ENCODE measurements at regions of chr7 and their contacts with region 1.

Region 1: GRCh38 chr7:87474533-87475358 is 734 bp downstream of the ABCB4 start:
- DNase-seq: peak; percentile 96
- ATAC-seq: peak; percentile 80
- H3K4me3 ChIP-seq: peak overlapping the region; percentile 77
- H3K27ac ChIP-seq: peak overlapping the region; percentile 72
- H3K4me1 ChIP-seq: peaks cover 12% of the 10 kb centered on the region
- H3K27me3 ChIP-seq: no peaks in the 10 kb centered on the region
- CTCF ChIP-seq: no peak
- EP300 ChIP-seq: peak; percentile 87 to 88
- POLR2A ChIP-seq: 0 out of 2 replicates have a peak, but pooled peaks have one; percentile 18
- RAD21 ChIP-seq: 0 out of 2 replicates have a peak, but pooled peaks have one; percentile 1

Region 2: GRCh38 chr7:87345166-87345927 is 129.4 kb before region 1 on chr7 and contains the start of gene CROT:
- CTCF ChIA-PET with region 1: no interaction called
- POLR2A ChIA-PET with region 1: interaction called, 3 read pairs
- RAD21 ChIA-PET with region 1: no interaction called
- SMC1A ChIA-PET with region 1: no interaction called
- in situ Hi-C with region 1: no loop called
- intact Hi-C with region 1: loop called (anchors 1 kb)
- DNase-seq: peak; percentile 67
- ATAC-seq: peak; percentile 97
- H3K4me3 ChIP-seq: peak within 1 kb of the TSS; percentile 80
- H3K27ac ChIP-seq: peak within 1 kb of the TSS; percentile 76
- H3K4me1 ChIP-seq: no peaks in the 10 kb centered on the region
- H3K27me3 ChIP-seq: no peaks in the 10 kb centered on the region
- CTCF ChIP-seq: no peak
- EP300 ChIP-seq: no peak
- POLR2A ChIP-seq: peak; percentile 91
- RAD21 ChIP-seq: no peak
- polyA plus RNA-seq, gene CROT: 5.5 to 6.0 TPM

Region 3: GRCh38 chr7:87391020-87391701 is 83.6 kb before region 1 on chr7:
- CTCF ChIA-PET with region 1: no interaction called
- POLR2A ChIA-PET with region 1: no interaction called
- RAD21 ChIA-PET with region 1: no interaction called
- SMC1A ChIA-PET with region 1: no interaction called
- in situ Hi-C with region 1: no loop called
- intact Hi-C with region 1: no loop called
- DNase-seq: no peak
- ATAC-seq: no peak
- H3K4me3 ChIP-seq: no peak overlapping the region
- H3K27ac ChIP-seq: no peak overlapping the region
- H3K4me1 ChIP-seq: no peaks in the 10 kb centered on the region
- H3K27me3 ChIP-seq: no peaks in the 10 kb centered on the region
- CTCF ChIP-seq: no peak
- EP300 ChIP-seq: no peak
- POLR2A ChIP-seq: no peak
- RAD21 ChIP-seq: no peak

Region 4: DNA sequence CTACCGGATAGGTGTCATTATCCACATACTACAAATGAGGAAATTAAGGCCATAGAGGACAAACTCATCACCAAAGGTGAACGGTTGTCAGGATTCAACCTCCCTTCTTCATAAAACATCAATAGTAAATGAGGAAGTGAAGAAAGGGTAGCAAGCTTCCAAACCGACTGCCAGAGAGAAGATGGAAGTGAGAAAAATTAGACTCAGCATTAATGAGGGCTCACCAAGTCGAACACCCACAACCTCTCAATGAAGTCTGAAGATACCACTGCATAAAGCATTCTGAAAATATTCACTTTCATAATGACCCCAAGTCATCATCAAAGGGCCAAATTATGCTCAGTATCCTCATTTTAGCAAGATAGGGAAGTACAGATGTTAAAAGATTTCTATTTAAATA is 28.8 kb before region 1 on chr7:
- CTCF ChIA-PET with region 1: interaction called, 3 read pairs
- POLR2A ChIA-PET with region 1: interaction called, 4 read pairs
- RAD21 ChIA-PET with region 1: interaction called, 3 read pairs
- SMC1A ChIA-PET with region 1: interaction called, 10 read pairs
- in situ Hi-C with region 1: no loop called
- intact Hi-C with region 1: loop called (anchors 1 kb)
- DNase-seq: peak; percentile 74
- ATAC-seq: peak; percentile 98
- H3K4me3 ChIP-seq: no peak overlapping the region
- H3K27ac ChIP-seq: no peak overlapping the region
- H3K4me1 ChIP-seq: peaks cover 4% of the 10 kb centered on the region; the same call in 1 of the 2 replicates
- H3K27me3 ChIP-seq: no peaks in the 10 kb centered on the region
- CTCF ChIP-seq: no peak
- EP300 ChIP-seq: peak; percentile 75 to 87; a peak in 3 of 4 replicates
- POLR2A ChIP-seq: no peak
- RAD21 ChIP-seq: no peak

Region 5: DNA sequence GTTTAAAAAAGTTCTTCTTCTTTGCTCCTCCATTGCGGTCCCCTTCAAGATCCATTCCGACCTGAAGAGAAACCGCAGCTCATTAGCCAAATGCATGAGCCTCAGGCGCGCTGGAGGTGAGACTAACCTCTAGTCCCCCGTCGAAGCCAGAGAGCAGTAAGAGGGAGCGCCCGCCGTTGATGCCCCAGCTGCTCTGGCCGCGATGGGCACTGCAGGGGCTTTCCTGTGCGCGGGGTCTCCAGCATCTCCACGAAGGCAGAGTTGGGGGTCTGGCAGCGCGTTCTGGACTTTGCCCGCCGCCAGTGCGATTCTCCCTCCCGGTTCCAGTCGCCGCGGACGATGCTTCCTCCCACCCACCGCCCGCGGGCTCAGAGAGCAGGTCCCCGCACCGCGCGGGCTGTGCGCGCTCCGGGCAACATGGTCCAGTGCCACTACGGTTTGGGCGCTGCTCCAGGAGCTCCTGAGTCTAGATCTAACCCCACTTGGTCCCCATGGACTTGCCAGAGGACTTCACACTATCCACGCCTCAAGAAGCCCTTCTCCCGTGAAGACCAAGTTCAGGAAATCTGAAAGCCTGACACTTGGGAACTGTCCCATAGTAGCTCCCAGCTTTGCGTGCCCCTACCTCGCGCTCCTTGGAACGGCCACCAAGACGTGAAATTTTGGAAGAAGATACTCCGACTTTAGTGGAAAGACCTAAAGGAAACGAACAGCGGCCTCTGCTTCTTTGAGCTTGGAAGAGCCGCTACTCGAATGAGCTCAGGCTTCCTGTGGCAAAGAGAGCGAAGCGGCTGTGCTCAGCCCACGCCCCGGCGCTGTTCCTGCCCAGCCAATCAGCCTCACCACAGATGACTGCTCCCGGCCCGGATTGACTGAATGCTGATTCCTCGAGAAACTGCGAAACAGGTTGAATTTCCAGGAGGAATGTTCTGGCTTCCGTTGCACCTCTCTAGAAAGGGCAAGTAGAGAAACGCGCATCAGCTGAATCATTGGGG is 125.7 kb after region 1 on chr7 and contains the start of gene ABCB1:
- CTCF ChIA-PET with region 1: interaction called, 3 read pairs
- POLR2A ChIA-PET with region 1: interaction called, 4 read pairs
- RAD21 ChIA-PET with region 1: interaction called, 18 read pairs
- SMC1A ChIA-PET with region 1: interaction called, 14 read pairs
- in situ Hi-C with region 1: no loop called
- intact Hi-C with region 1: loop called (anchors 1 kb)
- DNase-seq: no peak
- ATAC-seq: peak; percentile 77
- H3K4me3 ChIP-seq: peak within 1 kb of the TSS; percentile 50; the same call in 1 of the 2 replicates
- H3K27ac ChIP-seq: no peak within 1 kb of the TSS
- H3K4me1 ChIP-seq: peaks cover 22% of the 10 kb centered on the region
- H3K27me3 ChIP-seq: peaks cover 0 to 7% of the 10 kb centered on the region in 2 experiments; a peak in 1 of 4 replicates
- CTCF ChIP-seq: no peak; a peak in 1 of 6 replicates
- EP300 ChIP-seq: 0 out of 4 replicates have a peak, but pooled peaks of 1 of the 2 experiments have one; percentile 12
- POLR2A ChIP-seq: no peak
- RAD21 ChIP-seq: no peak
- polyA plus RNA-seq, gene ABCB1: 0.40 to 1.1 TPM

Region 6: DNA sequence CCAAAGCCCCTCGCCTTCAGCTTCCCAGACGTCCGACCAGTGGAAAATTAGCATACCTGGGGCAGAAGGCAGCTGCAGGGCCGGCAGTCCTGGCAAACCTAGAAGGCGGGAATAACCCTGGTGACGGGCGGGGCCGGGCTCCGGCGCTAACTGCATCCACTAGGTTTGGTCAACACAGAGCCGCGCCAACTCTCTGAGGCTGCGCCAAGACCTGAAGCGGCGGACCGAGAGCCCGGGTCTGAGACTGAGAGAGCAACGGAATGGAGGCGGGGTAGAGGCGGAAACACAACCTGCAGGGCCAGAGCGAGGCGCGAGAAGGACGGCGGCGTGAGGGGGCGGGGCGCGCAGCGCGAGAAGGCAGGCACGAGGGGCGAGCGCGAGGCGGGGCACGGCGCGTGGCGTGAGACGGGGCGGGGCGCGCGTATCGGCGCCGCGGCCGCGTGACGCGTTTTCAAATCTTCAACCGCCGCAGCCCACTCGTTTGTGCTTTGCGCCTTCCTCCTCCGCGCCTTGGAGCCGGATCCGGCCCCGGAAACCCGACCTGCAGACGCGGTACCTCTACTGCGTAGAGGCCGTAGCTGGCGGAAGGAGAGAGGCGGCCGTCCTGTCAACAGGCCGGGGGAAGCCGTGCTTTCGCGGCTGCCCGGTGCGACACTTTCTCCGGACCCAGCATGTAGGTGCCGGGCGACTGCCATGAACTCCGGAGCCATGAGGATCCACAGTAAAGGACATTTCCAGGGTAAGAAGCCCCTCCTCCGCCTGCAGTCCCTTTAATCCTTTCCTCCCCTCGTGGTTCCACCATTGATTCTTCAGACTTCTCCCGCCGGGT is 401.5 kb after region 1 on chr7 and contains the starts of genes DBF4 and SLC25A40:
- CTCF ChIA-PET with region 1: no interaction called
- POLR2A ChIA-PET with region 1: interaction called, 3 read pairs
- RAD21 ChIA-PET with region 1: interaction called, 3 read pairs
- SMC1A ChIA-PET with region 1: no interaction called
- in situ Hi-C with region 1: no loop called
- intact Hi-C with region 1: loop called (anchors 10 kb)
- DNase-seq: peak; percentile 86
- ATAC-seq: peak; percentile 86
- H3K4me3 ChIP-seq: peak within 1 kb of the TSS; percentile 88
- H3K27ac ChIP-seq: peak within 1 kb of the TSS; percentile 92
- H3K4me1 ChIP-seq: no peaks in the 10 kb centered on the region
- H3K27me3 ChIP-seq: no peaks in the 10 kb centered on the region
- CTCF ChIP-seq: no peak
- EP300 ChIP-seq: peak in 1 of 2 experiments; percentile 34; a peak in 1 of 4 replicates
- POLR2A ChIP-seq: peak; percentile 91
- RAD21 ChIP-seq: no peak
- polyA plus RNA-seq, gene DBF4: 46.1 to 47.0 TPM
- polyA plus RNA-seq, gene SLC25A40: 15.8 to 17.4 TPM